Activated naive CD4-positive, alpha-beta T cell treated with anti-CD3 and anti-CD28 coated beads for 36 hours (primary cell): ENCODE measurements at regions of chr19 and their contacts with region 1.

Region 1: DNA sequence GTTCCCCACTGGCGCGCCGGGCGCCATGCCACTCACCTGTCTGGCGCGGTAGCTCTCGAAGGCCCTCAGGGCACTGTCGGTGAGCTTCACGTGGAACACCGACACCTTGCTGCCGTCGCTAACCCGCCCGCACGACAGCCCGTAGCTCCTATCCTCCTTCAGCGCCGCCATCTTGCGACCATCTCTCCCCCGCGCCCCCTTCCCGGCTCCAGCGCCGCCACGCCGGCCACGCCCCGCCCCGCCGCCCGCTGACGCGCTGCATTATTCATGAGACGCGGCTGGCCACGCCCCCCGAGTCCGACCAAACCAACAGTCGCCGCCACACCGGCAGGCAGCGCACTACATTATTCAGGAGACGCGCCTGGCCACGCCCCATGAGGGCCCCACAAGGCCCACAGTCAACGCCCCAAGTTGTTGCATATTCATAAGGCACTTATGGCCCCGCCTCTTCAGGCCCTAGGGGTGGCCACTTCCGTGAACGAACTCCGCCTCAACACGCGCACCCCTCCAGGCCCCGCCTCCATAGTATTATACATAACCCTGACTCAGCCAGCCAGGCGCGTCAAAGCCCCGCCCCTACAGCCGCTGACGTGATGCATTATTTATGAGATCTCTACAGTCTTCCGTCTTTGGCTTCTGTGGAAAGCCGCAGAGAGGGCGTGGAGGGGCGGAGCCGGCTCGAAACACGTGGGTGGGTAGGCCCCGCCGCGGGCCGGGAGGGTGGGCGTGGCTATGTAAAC is at the start of gene ELL:
- DNase-seq: peak; percentile 100
- H3K4me3 Mint-ChIP-seq: peak within 1 kb of the TSS; percentile 85
- H3K27ac Mint-ChIP-seq: peak within 1 kb of the TSS; percentile 89
- H3K4me1 Mint-ChIP-seq: peaks cover 17% of the 10 kb centered on the region
- H3K27me3 Mint-ChIP-seq: no peaks in the 10 kb centered on the region
- total RNA-seq, gene ELL: 14.1 TPM

Region 2: GRCh38 chr19:18281082-18282020 is 240.7 kb before region 1 on chr19 and contains the start of gene JUND:
- CTCF ChIA-PET with region 1: interaction called, 3 read pairs
- intact Hi-C with region 1: loop called (anchors 1 kb)
- DNase-seq: peak; percentile 96
- H3K4me3 Mint-ChIP-seq: peak within 1 kb of the TSS; percentile 95
- H3K27ac Mint-ChIP-seq: peak within 1 kb of the TSS; percentile 99
- H3K4me1 Mint-ChIP-seq: peaks cover 45% of the 10 kb centered on the region
- H3K27me3 Mint-ChIP-seq: no peaks in the 10 kb centered on the region
- total RNA-seq, gene JUND: 87.9 to 105 TPM

Region 3: DNA sequence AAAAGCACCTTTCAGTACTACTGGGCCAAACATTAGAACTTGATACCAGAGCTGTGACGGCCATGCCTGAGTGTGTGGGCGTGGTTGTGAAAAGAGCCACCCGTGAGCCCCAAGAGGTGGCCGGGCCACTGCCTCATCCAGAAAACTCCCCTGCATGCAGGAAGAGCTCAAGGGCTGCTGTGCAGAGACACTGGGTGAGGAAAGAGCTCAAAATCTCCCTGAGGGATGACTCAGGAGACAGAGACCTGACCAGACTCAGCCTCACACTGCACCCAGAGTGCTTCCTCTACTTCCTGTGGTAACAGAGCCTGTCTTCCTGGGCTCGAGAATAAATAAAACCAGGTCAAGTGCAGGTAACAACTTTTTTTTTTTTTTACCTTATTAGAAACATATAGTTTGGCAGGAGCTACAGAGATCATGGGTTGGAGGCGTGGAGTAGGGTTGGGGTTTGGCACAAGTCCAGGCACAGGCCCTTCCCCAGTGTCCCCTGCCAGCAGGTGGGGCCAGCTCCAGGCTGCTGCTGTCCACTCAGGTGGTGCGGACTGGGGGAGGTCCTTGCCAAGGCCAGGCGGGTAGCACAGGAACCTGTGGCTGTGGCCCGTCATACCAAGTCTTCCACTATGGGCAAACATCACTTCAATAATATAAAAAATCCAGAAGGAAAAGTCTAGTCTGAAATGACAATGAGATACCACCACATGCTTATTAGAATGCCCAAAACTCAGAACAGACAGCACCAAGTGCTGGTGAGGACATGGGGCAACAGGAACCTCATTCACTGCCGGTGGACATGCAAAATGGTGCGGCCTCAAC is 25.7 kb before region 1 on chr19:
- CTCF ChIA-PET with region 1: interaction called, 13 read pairs
- intact Hi-C with region 1: loop called (anchors 1 kb)
- DNase-seq: peak; percentile 85
- H3K4me3 Mint-ChIP-seq: no peak overlapping the region
- H3K27ac Mint-ChIP-seq: peak overlapping the region; percentile 78
- H3K4me1 Mint-ChIP-seq: peaks cover 70% of the 10 kb centered on the region
- H3K27me3 Mint-ChIP-seq: no peaks in the 10 kb centered on the region

Region 4: GRCh38 chr19:18571564-18572300 is 49.7 kb after region 1 on chr19 and contains the start of gene UBA52:
- CTCF ChIA-PET with region 1: interaction called, 9 read pairs
- intact Hi-C with region 1: loop called (anchors 1 kb)
- DNase-seq: peak; percentile 99
- H3K4me3 Mint-ChIP-seq: peak within 1 kb of the TSS; percentile 90
- H3K27ac Mint-ChIP-seq: peak within 1 kb of the TSS; percentile 93
- H3K4me1 Mint-ChIP-seq: peaks cover 30% of the 10 kb centered on the region
- H3K27me3 Mint-ChIP-seq: no peaks in the 10 kb centered on the region
- total RNA-seq, gene UBA52: 1,997 to 2,122 TPM

Region 5: GRCh38 chr19:18846862-18847548 is 324.9 kb after region 1 on chr19:
- CTCF ChIA-PET with region 1: interaction called, 8 read pairs
- intact Hi-C with region 1: loop called (anchors 2 kb)
- DNase-seq: peak; percentile 79
- H3K4me3 Mint-ChIP-seq: no peak overlapping the region
- H3K27ac Mint-ChIP-seq: no peak overlapping the region
- H3K4me1 Mint-ChIP-seq: peaks cover 46% of the 10 kb centered on the region
- H3K27me3 Mint-ChIP-seq: no peaks in the 10 kb centered on the region

Region 6: GRCh38 chr19:18906605-18907519 is 384.8 kb after region 1 on chr19:
- CTCF ChIA-PET with region 1: no interaction called
- intact Hi-C with region 1: no loop called
- DNase-seq: no peak
- H3K4me3 Mint-ChIP-seq: no peak overlapping the region
- H3K27ac Mint-ChIP-seq: no peak overlapping the region
- H3K4me1 Mint-ChIP-seq: no peaks in the 10 kb centered on the region
- H3K27me3 Mint-ChIP-seq: no peaks in the 10 kb centered on the region

Region 7: DNA sequence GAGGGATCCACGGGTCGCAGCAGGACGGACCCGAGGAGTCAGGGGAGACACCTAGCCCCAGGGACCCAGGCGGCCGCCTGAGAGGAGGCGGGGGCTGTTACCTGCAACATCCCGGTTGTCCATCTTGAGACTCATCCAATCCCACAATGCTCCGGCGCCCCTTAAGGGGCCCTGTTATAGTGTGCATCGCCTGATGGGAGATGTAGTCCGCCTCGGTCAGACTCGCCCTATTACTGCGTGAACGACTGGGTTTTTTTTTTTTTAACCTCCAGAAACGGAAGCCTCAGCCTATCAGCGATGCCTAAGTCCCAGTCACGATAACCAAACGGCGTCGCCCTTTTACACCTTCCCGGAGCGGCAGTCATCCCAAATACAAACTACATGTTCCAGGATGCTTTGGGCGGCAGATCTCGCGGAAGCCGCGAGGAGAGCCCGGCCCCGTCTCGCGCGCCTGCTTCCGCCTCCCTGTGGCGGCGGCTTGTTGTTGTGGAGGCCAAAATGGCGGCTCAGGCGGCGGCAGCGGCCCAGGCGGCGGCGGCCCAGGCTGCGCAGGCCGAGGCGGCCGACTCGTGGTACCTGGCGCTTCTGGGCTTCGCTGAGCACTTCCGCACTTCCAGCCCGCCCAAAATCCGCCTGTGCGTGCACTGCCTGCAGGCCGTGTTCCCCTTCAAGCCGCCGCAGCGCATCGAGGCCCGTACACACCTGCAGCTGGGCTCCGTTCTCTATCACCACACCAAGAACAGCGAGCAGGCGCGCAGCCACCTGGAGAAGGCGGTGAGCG is 798.5 kb after region 1 on chr19 and contains the starts of genes MAU2 and SUGP1:
- CTCF ChIA-PET with region 1: no interaction called
- intact Hi-C with region 1: loop called (anchors 1 kb)
- DNase-seq: peak; percentile 94
- H3K4me3 Mint-ChIP-seq: peak within 1 kb of the TSS; percentile 93
- H3K27ac Mint-ChIP-seq: peak within 1 kb of the TSS; percentile 99
- H3K4me1 Mint-ChIP-seq: peaks cover 47% of the 10 kb centered on the region
- H3K27me3 Mint-ChIP-seq: no peaks in the 10 kb centered on the region
- total RNA-seq, gene MAU2: 38.6 to 42.5 TPM
- total RNA-seq, gene SUGP1: 31.7 to 32.4 TPM